ENCODE measurements at regions of chr6 and their contacts with region 1.

Region 1: GRCh38 chr6:15254070-15254841 is 8.4 kb downstream of the JARID2 start:
- DNase-seq: peak; percentile 90
- H3K4me3 ChIP-seq: peak overlapping the region; percentile 52
- H3K27ac ChIP-seq: peak overlapping the region; percentile 92
- H3K4me1 ChIP-seq: peaks cover 96% of the 10 kb centered on the region
- CTCF ChIP-seq: peak; percentile 74

Region 2: DNA sequence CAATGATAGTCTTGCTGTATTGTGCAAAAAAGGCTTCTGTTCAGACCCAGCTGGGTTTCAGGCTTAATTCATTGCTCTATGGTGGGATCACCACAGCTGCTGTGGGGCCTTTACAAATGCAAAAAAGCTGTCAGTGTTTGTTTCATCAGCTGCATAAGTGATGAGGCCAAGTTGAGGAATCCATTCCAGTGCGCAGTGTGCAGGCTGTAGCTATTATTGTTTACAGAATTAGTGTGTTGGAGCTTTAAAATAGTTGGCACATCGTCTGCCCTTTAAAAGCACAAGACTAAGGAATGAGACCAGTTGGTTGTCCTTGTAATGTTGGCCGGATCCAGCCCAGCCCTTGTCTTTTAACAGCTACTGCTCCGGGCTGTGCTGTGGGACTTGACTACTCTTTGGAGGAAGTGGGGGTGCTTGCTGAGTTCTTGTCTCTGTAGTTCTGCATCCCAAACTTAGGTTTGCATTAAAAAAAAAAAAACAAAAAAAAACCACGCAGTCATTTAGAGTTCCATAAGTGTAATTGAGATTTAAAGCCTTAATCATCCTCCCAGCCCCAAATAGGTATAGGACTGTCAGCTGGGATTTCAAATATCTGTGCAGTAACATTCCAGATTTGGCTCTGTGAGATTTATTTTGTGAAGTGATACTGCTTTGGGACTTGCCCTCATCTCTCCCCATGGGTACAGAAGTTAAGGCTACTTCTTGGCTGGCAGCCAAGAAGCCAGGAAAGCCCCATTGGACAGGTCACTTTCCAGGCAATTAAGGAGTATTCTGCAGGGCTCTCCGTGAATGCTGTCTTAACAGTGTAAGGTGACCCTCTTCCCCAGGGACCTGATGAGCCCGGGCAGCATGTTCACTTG is 10.9 kb after region 1 on chr6:
- CTCF ChIA-PET with region 1: interaction called, 4 read pairs
- POLR2A ChIA-PET with region 1: interaction called, 49 read pairs
- intact Hi-C with region 1: loop called (anchors 1 kb)
- DNase-seq: peak; percentile 51
- H3K4me3 ChIP-seq: peak overlapping the region; percentile 30
- H3K27ac ChIP-seq: no peak overlapping the region
- H3K4me1 ChIP-seq: peaks cover 76% of the 10 kb centered on the region
- CTCF ChIP-seq: no peak

Region 3: DNA sequence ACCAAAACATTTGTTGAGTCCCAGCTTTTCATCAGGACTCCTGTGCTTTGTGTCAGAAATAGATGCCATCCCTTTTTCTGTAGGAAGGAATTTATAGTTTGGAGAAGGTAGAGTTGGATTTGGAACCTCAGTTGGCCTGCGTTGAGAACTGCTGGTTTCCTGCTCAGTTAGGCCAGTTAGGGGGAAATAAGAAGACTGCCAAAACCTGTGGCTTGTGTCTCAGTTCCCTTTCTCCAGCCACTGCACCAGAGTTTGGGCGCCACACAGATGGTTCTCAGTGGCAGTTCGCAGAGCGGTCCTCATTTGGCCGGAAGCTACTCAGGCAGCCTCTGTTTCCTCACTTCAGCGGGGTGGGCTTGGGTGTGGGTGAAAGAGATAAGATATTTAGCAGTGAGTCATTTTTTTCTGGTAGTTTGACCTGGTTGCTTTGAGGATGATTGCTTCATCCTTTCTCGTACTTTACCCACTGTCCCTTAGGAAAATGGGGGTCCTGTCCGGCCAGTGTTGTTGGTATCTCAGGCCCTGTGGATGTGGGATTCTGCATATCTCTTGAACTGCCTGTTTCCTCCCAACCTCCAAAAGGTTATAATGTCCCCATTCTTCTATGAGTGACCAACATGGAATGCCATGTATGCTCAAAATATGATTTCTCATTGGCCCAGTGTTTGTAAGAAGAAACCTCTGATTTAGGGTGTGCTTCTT is 45.3 kb after region 1 on chr6:
- CTCF ChIA-PET with region 1: no interaction called
- POLR2A ChIA-PET with region 1: interaction called, 7 read pairs
- intact Hi-C with region 1: loop called (anchors 1 kb)
- DNase-seq: peak; percentile 93
- H3K4me3 ChIP-seq: peak overlapping the region; percentile 44
- H3K27ac ChIP-seq: peak overlapping the region; percentile 90
- H3K4me1 ChIP-seq: peaks cover 61% of the 10 kb centered on the region
- CTCF ChIP-seq: no peak

Region 4: DNA sequence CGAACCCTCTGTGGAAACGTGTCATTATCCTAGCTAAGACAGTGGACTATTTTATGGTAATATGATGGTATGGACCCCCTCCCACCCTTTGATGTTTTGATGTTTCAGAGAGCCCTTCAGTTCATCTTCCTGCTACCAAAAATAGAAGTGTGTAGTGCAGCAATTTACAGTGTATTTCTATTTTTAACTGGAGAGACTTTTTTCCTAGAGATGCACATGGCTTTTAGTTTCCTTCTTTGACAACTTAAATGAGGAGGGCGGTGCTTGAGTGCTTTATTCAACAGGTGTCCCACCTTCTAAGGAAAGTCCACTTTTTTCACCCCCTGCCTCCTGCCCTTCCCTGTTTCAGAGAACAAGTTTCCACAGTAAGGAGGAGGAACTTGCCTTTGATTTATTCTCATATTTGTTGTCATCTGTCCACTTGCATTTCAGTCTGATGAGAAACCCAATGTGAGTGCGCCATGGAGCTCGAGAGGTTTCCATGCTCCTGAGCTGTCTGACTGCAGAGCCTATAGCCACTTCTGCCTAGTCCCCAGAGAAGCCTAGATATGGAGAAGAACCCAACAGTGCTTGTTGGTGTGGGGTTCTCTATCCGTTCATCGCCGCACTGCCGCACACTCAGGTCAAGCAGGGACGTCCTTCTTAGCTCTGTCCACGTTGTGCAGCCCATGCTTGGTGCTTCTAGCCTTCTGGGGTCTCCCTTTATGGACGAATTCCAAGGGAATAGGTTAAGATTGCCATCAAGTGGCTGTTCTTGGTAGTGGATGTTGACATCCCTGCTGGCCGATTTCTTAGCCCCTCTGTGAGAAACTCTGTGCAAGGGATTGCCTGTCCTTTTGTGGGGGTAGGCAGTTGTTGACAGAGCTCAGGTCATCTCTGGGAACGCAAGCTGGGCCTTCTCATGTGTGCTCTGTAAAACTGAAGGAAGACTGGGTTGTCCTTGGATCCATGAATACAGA is 135.8 kb after region 1 on chr6:
- CTCF ChIA-PET with region 1: no interaction called
- POLR2A ChIA-PET with region 1: interaction called, 4 read pairs
- intact Hi-C with region 1: loop called (anchors 1 kb)
- DNase-seq: peak; percentile 69
- H3K4me3 ChIP-seq: no peak overlapping the region
- H3K27ac ChIP-seq: no peak overlapping the region
- H3K4me1 ChIP-seq: peaks cover 16% of the 10 kb centered on the region
- CTCF ChIP-seq: peak; percentile 86

Region 5: GRCh38 chr6:15429141-15430110 is 175.2 kb after region 1 on chr6:
- CTCF ChIA-PET with region 1: no interaction called
- POLR2A ChIA-PET with region 1: no interaction called
- intact Hi-C with region 1: no loop called
- DNase-seq: no peak
- H3K4me3 ChIP-seq: no peak overlapping the region
- H3K27ac ChIP-seq: no peak overlapping the region
- H3K4me1 ChIP-seq: peaks cover 28% of the 10 kb centered on the region
- CTCF ChIP-seq: no peak

Region 6: GRCh38 chr6:15441215-15441868 is 187.1 kb after region 1 on chr6:
- CTCF ChIA-PET with region 1: no interaction called
- POLR2A ChIA-PET with region 1: no interaction called
- intact Hi-C with region 1: loop called (anchors 2 kb)
- DNase-seq: peak; percentile 59
- H3K4me3 ChIP-seq: no peak overlapping the region
- H3K27ac ChIP-seq: no peak overlapping the region
- H3K4me1 ChIP-seq: peaks cover 11% of the 10 kb centered on the region
- CTCF ChIP-seq: peak; percentile 89